Heart right ventricle (tissue), 16 donors: ENCODE measurements at regions of chr3 and their contacts with region 1.

Region 1: GRCh38 chr3:149969940-149970715 is 567 bp downstream of the PFN2 start:
- DNase-seq: peak; percentile 81 to 83
- ATAC-seq: peak; percentile 65 to 81 (median 78)
- H3K4me3 ChIP-seq: peak overlapping the region; percentile 77 to 98 (median 84)
- H3K27ac ChIP-seq: peak overlapping the region; percentile 64 to 96 (median 92)
- H3K4me1 ChIP-seq: peaks cover 0 to 45% (median 39%) of the 10 kb centered on the region in 9 donors
- H3K27me3 ChIP-seq: peaks cover 0 to 55% (median 0%) of the 10 kb centered on the region in 7 donors
- CTCF ChIP-seq: no peak

Region 2: GRCh38 chr3:149879872-149880271 is 90.3 kb before region 1 on chr3:
- intact Hi-C with region 1: loop called in 1 of 10 experiments (anchors 10 kb)
- DNase-seq: peak; percentile 47 to 55
- ATAC-seq: peak in 6 of 8 donors; percentile 75 to 86 (median 82)
- H3K4me3 ChIP-seq: no peak overlapping the region
- H3K27ac ChIP-seq: no peak overlapping the region
- H3K4me1 ChIP-seq: peaks cover 0 to 18% (median 0%) of the 10 kb centered on the region in 9 donors
- H3K27me3 ChIP-seq: no peaks in the 10 kb centered on the region
- CTCF ChIP-seq: peak in 8 of 9 donors; percentile 19 to 70 (median 60)

Region 3: DNA sequence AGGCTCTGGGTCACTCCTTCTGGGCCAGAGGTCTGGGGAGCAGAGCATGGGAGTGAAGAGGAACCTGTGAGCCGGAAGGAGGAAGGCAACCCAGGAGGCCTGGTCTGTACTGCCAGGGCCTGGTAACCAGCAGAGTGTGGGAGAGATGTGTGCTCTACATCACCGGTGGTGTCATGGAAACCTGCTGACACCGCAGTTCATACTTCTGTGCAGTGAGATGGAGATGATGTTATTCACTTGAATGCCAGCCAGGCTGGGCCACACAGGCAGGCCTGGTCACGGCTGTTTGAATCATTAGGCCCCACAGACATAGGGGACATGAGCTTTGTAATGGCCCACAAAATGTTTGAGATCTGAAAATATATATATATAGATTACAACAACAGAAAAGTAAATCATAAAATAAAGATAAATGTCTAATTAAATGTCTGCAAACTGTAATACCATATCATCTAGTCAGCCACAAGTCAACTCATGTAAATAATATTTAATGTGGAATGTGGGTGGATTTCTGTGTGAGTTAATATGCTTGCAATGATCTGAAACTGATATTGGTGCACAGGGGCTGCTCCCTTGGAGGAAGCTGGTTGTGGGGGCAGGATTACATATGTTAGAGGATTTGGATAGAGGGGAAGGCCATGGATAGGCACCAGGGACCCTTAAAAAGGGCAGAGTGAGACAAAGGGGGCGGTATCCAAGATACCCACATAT is 109.1 kb after region 1 on chr3:
- intact Hi-C with region 1: loop called in 2 of 10 experiments (anchors 5 kb)
- DNase-seq: no peak
- ATAC-seq: peak in 4 of 8 donors; percentile 14 to 50 (median 30)
- H3K4me3 ChIP-seq: no peak overlapping the region
- H3K27ac ChIP-seq: peak overlapping the region in 6 of 10 donors; percentile 45 to 64 (median 56)
- H3K4me1 ChIP-seq: peaks cover 5 to 43% (median 20%) of the 10 kb centered on the region in 9 donors
- H3K27me3 ChIP-seq: no peaks in the 10 kb centered on the region
- CTCF ChIP-seq: no peak

Region 4: DNA sequence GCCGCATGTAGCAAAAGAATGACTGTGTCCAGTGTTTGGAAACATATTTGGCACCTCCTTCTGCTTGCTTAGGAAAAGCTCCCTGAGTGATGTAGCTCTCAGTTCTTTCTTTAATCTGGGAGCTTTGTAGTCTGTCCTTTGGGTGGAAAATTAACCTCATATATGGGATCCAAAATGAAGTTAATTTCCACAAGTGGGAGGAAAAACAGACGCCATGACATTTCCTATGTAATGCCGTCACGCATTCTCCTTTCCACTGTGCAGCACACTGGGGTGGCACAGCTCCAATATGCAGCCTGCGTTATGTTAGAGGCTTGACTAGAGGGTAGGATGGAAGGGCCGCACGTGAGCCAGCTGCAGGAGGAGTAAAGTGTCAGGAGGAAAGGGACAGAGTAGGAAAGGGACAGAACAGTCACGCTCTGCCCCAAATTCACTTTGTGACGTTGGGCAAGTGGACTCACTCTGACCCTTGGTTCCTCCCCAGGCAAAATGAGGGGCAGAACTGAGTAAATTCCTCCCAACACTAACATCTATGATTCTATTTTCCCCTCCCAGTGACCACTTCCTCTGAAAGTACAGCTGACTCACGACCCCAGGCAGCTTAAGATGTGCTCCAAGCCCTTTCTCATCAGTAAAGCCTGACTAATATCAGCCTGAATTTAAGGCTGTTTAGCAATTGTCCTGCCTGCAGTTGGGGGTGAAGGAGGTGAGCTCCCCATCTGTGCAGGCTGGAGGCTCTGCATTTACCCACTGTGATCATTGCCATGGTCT is 177.0 kb after region 1 on chr3:
- intact Hi-C with region 1: no loop called
- DNase-seq: peak; percentile 13 to 20
- ATAC-seq: peak in 6 of 8 donors; percentile 17 to 62 (median 48)
- H3K4me3 ChIP-seq: no peak overlapping the region
- H3K27ac ChIP-seq: peak overlapping the region in 4 of 10 donors; percentile 13 to 66 (median 32)
- H3K4me1 ChIP-seq: peaks cover 0 to 32% (median 10%) of the 10 kb centered on the region in 9 donors
- H3K27me3 ChIP-seq: no peaks in the 10 kb centered on the region
- CTCF ChIP-seq: no peak

Region 5: DNA sequence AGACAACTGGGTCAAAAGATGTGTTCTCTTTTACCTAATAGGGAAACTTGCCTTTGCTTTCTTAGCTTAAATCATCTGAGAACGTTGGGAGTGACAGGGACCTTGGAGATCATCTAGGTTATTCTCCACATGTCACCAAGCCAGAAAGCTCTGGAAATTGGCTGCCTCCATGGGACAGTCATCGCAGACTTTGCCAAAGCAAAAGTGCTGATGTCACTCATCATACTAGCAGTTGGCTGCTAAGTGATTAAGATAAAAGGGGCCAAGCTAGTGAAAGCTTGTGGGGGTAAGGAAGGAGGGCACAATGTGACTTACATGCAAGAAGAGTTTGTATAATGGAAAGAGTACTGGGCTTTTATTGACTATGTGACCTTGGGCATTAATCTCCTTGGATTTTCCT is 198.6 kb after region 1 on chr3:
- intact Hi-C with region 1: loop called in 1 of 10 experiments (anchors 5 kb)
- DNase-seq: peak in 1 of 2 donors; percentile 82
- ATAC-seq: peak; percentile 88 to 96 (median 92)
- H3K4me3 ChIP-seq: no peak overlapping the region
- H3K27ac ChIP-seq: peak overlapping the region in 9 of 10 donors; percentile 35 to 82 (median 62)
- H3K4me1 ChIP-seq: peaks cover 0 to 23% (median 9%) of the 10 kb centered on the region in 9 donors
- H3K27me3 ChIP-seq: no peaks in the 10 kb centered on the region
- CTCF ChIP-seq: no peak

Region 6: GRCh38 chr3:150183678-150184425 is 213.7 kb after region 1 on chr3:
- intact Hi-C with region 1: loop called (anchors 1 to 5 kb)
- DNase-seq: peak; percentile 54 to 69
- ATAC-seq: peak; percentile 86 to 97 (median 96)
- H3K4me3 ChIP-seq: peak overlapping the region in 9 of 10 donors; percentile 12 to 57 (median 45)
- H3K27ac ChIP-seq: peak overlapping the region in 5 of 10 donors; percentile 29 to 51 (median 34)
- H3K4me1 ChIP-seq: peaks cover 0 to 21% (median 12%) of the 10 kb centered on the region in 9 donors
- H3K27me3 ChIP-seq: no peaks in the 10 kb centered on the region
- CTCF ChIP-seq: peak; percentile 30 to 86 (median 66)

Region 7: GRCh38 chr3:150216041-150216811 is 246.1 kb after region 1 on chr3:
- intact Hi-C with region 1: loop called in 6 of 10 experiments (anchors 1 to 10 kb)
- DNase-seq: peak; percentile 41 to 70
- ATAC-seq: peak; percentile 83 to 97 (median 92)
- H3K4me3 ChIP-seq: no peak overlapping the region
- H3K27ac ChIP-seq: peak overlapping the region in 8 of 10 donors; percentile 14 to 68 (median 44)
- H3K4me1 ChIP-seq: peaks cover 0 to 24% (median 17%) of the 10 kb centered on the region in 9 donors
- H3K27me3 ChIP-seq: peaks cover 0 to 6% (median 0%) of the 10 kb centered on the region in 7 donors
- CTCF ChIP-seq: no peak

Region 8: DNA sequence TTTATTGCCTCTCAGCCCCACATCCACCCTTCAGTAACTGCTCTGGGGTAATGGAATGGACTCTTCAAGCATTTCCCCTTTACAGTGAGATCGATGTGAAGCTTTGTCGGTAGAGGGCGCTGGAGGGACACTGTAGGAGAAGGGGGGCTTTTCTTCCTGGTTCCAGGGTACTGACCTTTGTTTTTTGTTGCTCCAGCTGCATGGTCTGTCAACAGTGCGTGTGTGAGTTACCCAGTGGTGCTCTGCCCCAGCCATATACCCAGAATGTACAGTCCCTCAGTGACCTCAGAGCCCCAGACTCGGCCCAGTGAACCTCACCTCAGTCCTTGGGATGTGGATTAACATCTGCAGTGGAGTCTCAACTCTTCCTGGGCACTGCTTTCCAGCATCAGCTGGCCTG is 257.7 kb after region 1 on chr3:
- intact Hi-C with region 1: loop called in 2 of 10 experiments (anchors 5 to 10 kb)
- DNase-seq: peak; percentile 11 to 59
- ATAC-seq: peak in 6 of 8 donors; percentile 14 to 47 (median 28)
- H3K4me3 ChIP-seq: no peak overlapping the region
- H3K27ac ChIP-seq: no peak overlapping the region
- H3K4me1 ChIP-seq: peaks cover 0 to 34% (median 6%) of the 10 kb centered on the region in 9 donors
- H3K27me3 ChIP-seq: peaks cover 0 to 7% (median 0%) of the 10 kb centered on the region in 7 donors
- CTCF ChIP-seq: peak; percentile 42 to 74 (median 61)